GM13977 (cell line): ENCODE measurements at regions of chr7 and their contacts with region 1.

Region 1: DNA sequence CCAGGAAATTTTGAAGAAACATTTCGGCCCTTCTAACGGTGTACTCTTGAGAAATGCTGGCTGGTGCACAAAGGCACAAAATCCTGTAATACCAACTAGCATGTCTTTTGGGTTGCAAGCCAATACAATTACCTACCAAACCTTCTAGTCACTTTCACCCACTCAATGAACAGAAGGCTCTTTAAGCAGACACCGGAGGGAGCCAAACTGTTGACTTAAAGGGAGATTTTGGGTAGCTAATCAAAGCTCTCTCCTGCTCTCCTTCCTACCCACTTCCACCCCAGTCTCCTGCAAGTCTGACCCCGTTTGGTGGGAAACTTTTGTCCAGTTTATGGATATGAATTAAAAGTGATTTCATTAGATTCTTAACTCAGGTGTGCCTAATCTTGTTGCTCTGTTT is 24.0 kb downstream of the GRM3 start:
- DNase-seq: no peak
- CTCF ChIP-seq: peak; percentile 66

Region 2: GRCh38 chr7:86814661-86815379 is 147.1 kb after region 1 on chr7:
- in situ Hi-C with region 1: loop called (anchors 10 kb)
- DNase-seq: peak; percentile 14
- CTCF ChIP-seq: peak; percentile 74

Region 3: GRCh38 chr7:87219545-87220025 is 551.9 kb after region 1 on chr7 and contains the start of gene TMEM243:
- in situ Hi-C with region 1: no loop called
- DNase-seq: peak; percentile 89
- CTCF ChIP-seq: peak; percentile 50